Activated T-helper 1 cell treated with anti-CD3 and anti-CD28 coated beads, Interleukin-12 subunit alpha, Interleukin-12 subunit beta, Interleukin-2, Interleukin-4 antibody, amounts not matched to agents 30 ng/mL and 10 ng/mL and 1 ng/mL, durations not matched to agents 14 hours and 24 hours and 36 hours (primary cell): ENCODE measurements at regions of chr1 and their contacts with region 1.

Region 1: GRCh38 chr1:210448297-210448892 is 119.7 kb downstream of the HHAT start:
- DNase-seq: no peak
- H3K4me3 Mint-ChIP-seq: no peak overlapping the region
- H3K27ac Mint-ChIP-seq: no peak overlapping the region
- H3K4me1 Mint-ChIP-seq: peaks cover 21% of the 10 kb centered on the region
- H3K27me3 Mint-ChIP-seq: peaks cover 3% of the 10 kb centered on the region

Region 2: DNA sequence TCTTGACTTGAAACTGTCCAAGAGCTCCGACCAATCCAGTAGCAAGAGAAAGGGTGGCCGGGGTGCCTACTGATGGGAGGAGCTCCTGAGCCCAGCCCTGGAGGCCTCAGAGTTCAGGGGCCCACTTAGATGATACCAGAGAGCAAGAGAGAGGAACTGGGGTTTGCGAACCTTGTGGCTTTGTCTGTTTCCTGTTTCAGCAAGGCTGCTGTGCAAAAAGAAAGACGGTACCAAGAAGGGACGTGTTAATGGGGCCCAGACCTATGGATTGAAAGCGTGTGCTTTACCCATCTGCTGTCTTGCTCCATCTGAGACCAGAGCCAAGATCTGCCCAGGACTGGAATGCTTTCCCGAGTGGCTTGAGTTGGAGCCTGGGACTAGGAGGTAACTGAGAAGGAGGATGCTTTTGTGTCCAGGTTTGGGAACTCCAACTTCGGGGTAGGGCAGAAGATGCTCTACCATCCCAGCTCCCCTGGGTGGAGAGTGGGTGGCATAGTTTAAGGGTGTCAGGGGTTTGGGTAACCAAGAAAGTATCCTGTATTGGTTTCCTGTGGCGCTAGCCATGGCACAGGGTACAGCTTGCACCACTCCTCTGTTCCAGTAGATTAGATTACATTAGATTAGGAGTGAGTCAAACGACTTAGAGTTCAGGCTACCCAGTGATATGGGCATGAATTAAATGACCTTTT is 692.3 kb before region 1 on chr1 and contains the start of gene TRAF3IP3:
- intact Hi-C with region 1: loop called (anchors 10 kb)
- DNase-seq: peak; percentile 74
- H3K4me3 Mint-ChIP-seq: peak within 1 kb of the TSS; percentile 99
- H3K27ac Mint-ChIP-seq: peak within 1 kb of the TSS; percentile 98
- H3K4me1 Mint-ChIP-seq: peaks cover 80% of the 10 kb centered on the region
- H3K27me3 Mint-ChIP-seq: no peaks in the 10 kb centered on the region
- total RNA-seq, gene TRAF3IP3: 378 and 384 TPM in 2 replicates

Region 3: DNA sequence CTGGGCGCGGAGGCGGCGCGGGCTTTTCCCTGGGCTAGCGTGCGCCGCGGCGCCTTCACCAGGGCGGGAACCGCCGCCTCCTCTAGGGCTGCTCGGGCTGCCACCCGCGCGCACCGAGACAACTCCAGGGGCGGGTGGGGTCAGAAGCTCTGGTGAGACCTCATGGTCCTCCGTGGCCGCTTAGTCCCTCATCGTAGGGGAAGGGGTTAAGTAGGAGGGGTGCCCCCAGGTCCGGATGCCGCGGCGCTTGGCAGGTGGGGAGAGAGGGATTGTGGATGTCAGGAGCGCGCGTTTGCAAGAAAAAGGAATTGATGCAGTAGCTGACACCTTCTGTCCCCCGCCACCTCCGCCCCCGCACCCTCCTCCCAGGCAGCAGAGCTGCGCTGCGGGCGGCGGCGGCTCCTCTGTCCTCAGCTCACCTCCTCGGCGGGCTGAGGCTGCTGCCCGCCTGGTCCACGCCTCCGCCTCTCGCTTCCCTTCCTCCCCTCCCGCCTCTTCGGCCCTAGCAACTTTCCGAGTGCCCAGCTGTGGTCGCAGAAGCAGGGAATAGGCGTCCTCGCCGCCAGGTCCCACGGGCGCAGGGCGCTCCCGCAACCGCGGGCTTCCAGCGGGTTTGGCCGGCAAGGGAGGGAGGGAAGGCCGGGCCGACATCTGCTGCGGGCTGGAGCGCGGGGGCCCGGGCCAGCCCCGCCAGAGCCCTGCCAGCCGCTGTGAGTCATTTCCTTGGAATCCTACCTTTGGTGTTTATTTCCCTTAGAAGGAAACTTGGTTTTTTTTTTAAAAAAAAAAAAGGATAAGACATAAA is 215.0 kb before region 1 on chr1:
- intact Hi-C with region 1: no loop called
- DNase-seq: no peak
- H3K4me3 Mint-ChIP-seq: peak overlapping the region; percentile 45
- H3K27ac Mint-ChIP-seq: no peak overlapping the region
- H3K4me1 Mint-ChIP-seq: peaks cover 6% of the 10 kb centered on the region
- H3K27me3 Mint-ChIP-seq: peaks cover 48% of the 10 kb centered on the region

Region 4: DNA sequence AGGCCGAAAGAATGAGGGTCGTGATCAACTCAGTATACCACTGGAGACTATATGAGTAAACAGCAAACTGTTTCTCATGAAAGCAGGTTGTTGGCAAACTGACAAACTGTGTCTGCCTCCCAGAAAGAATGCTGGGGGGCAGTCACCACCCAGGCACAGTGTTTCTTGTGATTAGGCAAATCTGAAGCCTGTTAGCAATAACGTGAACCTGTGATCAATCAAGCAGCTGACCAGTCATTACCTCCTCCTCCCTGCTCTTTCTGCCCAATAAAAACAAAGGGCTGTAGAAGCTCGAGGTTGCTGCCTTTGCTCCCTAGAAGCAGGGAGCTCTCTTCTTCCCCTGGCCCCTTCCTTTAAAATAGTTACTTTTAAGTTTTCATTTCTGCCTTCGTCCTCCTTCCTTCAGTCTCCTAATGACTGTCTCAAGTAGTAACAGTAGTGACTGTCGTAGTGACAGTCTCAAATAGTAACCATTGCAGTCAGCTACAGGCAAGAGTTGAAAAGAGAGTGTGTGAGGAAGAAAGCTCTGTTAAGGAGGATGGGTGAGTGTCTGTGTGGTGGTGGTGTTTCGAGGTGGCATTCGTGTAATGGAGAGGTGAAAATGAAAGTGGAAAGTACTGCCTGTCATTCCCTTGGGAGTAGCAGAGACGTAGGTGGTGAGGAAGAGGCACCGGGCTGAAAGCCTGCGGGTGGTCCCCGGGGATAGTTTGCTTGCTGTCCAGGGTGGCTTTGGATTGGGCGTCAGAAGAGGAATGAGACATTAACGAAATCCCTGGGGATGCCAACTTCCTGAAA is 105.2 kb before region 1 on chr1:
- intact Hi-C with region 1: loop called (anchors 2 kb)
- DNase-seq: no peak
- H3K4me3 Mint-ChIP-seq: no peak overlapping the region
- H3K27ac Mint-ChIP-seq: no peak overlapping the region
- H3K4me1 Mint-ChIP-seq: peaks cover 29% of the 10 kb centered on the region
- H3K27me3 Mint-ChIP-seq: peaks cover 9% of the 10 kb centered on the region

Region 5: DNA sequence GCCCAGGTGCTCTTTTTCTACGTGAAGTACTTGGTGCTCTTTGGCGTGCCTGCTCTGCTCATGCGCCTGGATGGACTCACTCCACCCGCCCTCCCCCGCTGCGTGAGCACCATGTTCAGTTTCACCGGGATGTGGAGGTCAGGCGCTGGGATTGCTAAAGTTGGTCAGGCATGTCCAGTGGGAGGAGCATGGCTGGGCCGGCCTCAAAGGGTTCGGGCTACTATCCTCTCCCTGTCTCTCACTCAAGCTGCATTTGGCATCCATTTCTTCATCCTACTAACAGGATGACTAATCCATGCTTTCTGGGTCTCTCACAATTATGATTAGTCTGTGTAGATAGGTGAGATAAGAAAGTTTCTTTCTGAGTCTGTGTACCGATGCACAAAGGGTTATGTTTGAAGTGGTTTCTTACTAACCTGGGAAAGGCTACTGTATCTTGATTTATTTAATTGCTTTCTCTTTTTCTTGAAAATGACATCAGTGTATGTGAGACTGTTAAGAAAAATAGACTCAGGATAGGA is 16.2 kb after region 1 on chr1:
- intact Hi-C with region 1: loop called (anchors 1 kb)
- DNase-seq: no peak
- H3K4me3 Mint-ChIP-seq: no peak overlapping the region
- H3K27ac Mint-ChIP-seq: no peak overlapping the region
- H3K4me1 Mint-ChIP-seq: peaks cover 19% of the 10 kb centered on the region
- H3K27me3 Mint-ChIP-seq: peaks cover 2% of the 10 kb centered on the region

Region 6: GRCh38 chr1:211133836-211134669 is 685.7 kb after region 1 on chr1 and contains the start of gene KCNH1:
- intact Hi-C with region 1: loop called (anchors 1 kb)
- DNase-seq: peak; percentile 54
- H3K4me3 Mint-ChIP-seq: peak within 1 kb of the TSS; percentile 50
- H3K27ac Mint-ChIP-seq: no peak within 1 kb of the TSS
- H3K4me1 Mint-ChIP-seq: no peaks in the 10 kb centered on the region
- H3K27me3 Mint-ChIP-seq: peaks cover 70% of the 10 kb centered on the region
- total RNA-seq, gene KCNH1: not detected in 2 replicates

Region 7: GRCh38 chr1:211514030-211514754 is 1065.8 kb after region 1 on chr1:
- intact Hi-C with region 1: loop called (anchors 2 kb)
- DNase-seq: peak; percentile 58
- H3K4me3 Mint-ChIP-seq: peak overlapping the region; percentile 66
- H3K27ac Mint-ChIP-seq: peak overlapping the region; percentile 55
- H3K4me1 Mint-ChIP-seq: peaks cover 27% of the 10 kb centered on the region
- H3K27me3 Mint-ChIP-seq: peaks cover 13% of the 10 kb centered on the region

Region 8: DNA sequence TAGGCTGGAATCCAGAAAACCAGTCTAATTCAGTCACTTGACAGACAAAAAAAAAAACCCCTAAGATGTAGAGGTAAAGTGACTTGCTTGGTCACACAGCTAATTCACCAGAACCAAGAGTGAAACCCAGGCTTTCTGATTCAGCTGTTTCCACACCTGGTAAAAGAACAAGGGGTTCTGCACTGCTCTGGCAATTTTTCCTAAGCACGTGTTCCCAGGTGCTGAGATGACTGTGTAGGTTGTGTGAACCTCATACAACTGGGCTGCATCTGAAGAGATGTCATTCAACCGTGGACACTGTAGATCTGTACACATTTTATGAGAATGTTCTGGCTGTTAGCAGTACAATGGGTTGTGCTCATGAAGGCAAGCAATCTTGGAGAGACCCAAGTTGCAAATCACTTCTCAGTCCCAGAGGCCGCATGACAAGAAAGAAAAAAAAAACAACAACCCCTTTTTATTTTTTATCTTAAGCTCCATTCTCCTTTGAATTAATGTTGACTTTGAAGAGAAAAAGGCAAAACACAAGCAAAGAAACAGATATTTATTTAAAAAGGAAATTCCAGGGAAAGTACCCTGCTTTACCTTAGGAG is 1491.6 kb after region 1 on chr1:
- intact Hi-C with region 1: loop called (anchors 10 kb)
- DNase-seq: peak; percentile 33
- H3K4me3 Mint-ChIP-seq: no peak overlapping the region
- H3K27ac Mint-ChIP-seq: peak overlapping the region; percentile 2
- H3K4me1 Mint-ChIP-seq: peaks cover 47% of the 10 kb centered on the region
- H3K27me3 Mint-ChIP-seq: no peaks in the 10 kb centered on the region